ENCODE measurements at regions of chr10 and their contacts with region 1.

Region 1: DNA sequence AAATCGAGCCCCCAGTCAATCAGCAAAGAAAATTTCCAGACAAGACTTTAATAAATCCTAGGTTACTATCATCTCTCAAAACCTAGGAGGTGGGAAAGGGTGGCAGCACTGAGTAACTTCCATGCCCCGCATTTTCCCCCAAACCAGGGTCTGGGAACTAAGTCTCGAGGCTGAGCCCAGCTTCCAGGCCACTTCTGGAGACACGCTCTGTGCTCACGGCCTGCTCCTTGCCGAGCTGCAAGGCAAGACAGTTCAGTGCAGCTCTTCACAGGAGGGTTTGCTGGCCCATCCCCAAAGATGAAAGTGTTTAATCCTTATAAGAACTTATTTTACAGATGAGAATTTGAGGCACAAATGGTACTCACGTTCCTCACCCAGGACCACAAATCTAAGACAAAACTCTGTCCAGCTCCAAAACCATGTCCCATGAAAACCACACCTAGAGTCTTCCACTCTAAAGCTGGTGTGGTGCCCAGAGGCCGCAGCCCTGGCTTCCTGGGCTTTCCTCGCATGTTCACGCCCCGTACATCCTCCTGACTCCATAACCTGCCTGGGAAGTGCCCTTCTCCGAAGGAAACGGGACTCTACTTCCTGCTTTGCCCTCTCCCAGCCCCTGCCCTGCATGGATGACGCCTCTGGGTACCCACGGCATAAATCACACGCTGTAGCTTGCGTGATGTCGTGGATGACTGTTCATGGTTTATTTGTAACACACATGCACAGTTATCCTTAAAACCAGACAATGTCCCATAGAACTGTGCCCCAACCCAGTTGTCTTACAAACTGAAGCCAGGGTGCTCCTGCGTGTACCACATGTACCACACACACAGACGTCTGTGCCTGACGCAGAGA is 201.2 kb downstream of the DIP2C start:
- DNase-seq: peak in 1 of 35 experiments; percentile 18
- ATAC-seq: no peak
- H3K4me3 ChIP-seq: no peak overlapping the region
- H3K4me3 Mint-ChIP-seq: no peak overlapping the region
- H3K27ac ChIP-seq: no peak overlapping the region
- H3K27ac Mint-ChIP-seq: no peak overlapping the region
- H3K4me1 ChIP-seq: peaks cover 2 to 18% of the 10 kb centered on the region in 2 experiments
- H3K4me1 Mint-ChIP-seq: peaks cover 0 to 24% (median 20%) of the 10 kb centered on the region in 3 donors
- H3K27me3 ChIP-seq: peaks cover 0 to 22% of the 10 kb centered on the region in 2 experiments
- H3K27me3 Mint-ChIP-seq: peaks cover 12 to 14% of the 10 kb centered on the region in 2 donors

Region 2: DNA sequence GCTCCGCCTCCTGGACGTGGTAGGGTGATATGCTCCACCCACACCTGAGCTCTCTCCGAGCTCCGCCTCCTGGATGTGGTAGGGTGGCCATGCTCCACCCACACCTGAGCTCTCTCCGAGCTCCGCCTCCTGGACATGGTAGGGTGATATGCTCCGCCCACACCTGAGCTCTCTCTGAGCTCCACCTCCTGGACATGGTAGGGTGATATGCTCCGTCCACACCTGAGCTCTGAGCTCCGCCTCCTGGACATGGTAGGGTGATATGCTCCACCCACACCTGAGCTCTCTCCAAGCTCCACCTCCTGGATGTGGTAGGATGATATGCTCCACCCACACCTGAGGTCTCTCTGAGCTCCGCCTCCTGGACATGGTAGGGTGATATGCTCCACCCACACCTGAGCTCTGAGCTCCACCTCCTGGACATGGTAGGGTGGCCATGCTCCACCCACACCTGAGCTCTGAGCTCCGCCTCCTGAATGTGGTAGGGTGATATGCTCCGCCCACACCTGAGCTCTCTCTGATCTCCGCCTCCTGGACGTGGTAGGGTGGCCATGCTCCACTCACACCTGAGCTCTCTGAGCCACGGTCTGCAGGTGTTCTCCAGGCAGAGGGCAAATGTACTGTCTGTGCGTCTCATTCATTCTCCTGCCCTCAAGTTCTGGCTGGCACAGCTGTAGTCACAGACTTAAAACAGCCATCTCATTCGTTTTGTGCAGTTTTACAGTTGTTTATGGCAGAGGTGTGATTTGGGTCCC is 51.2 kb before region 1 on chr10:
- CTCF ChIA-PET with region 1: no interaction called
- POLR2A ChIA-PET with region 1: no interaction called
- DNase-seq: peak in 1 of 35 experiments; percentile 6
- ATAC-seq: peak; percentile 54 to 67 (median 58)
- H3K4me3 ChIP-seq: no peak overlapping the region
- H3K4me3 Mint-ChIP-seq: peak overlapping the region in 2 of 3 donors; percentile 35 to 60
- H3K27ac ChIP-seq: peak overlapping the region; percentile 15
- H3K27ac Mint-ChIP-seq: peak overlapping the region; percentile 70 to 82
- H3K4me1 ChIP-seq: peaks cover 18 to 29% of the 10 kb centered on the region in 2 experiments
- H3K4me1 Mint-ChIP-seq: peaks cover 42 to 57% (median 47%) of the 10 kb centered on the region in 3 donors
- H3K27me3 ChIP-seq: peaks cover 0 to 4% of the 10 kb centered on the region in 2 experiments
- H3K27me3 Mint-ChIP-seq: peaks cover 0 to 12% of the 10 kb centered on the region in 2 donors

Region 3: DNA sequence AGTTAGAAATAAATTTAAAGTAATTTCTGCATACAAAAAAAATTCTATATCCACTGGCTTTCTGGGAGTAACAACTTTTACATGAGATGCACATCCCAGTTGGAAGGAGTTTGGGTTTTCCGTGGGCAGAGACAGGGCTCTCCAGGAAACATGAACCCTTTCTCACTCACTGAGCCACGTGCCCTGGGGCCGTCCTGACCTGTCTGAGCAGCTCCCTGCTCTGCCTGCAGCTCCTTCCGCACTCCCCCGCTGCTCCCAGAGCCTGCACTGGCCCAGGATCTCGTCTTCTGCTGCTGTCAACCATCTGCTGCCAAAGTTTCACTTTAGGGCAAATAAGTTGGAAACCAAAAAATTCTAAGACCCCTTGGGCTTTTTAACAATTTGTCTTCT is 32.1 kb after region 1 on chr10:
- CTCF ChIA-PET with region 1: no interaction called
- POLR2A ChIA-PET with region 1: no interaction called
- DNase-seq: no peak
- ATAC-seq: no peak
- H3K4me3 ChIP-seq: no peak overlapping the region
- H3K4me3 Mint-ChIP-seq: no peak overlapping the region
- H3K27ac ChIP-seq: no peak overlapping the region
- H3K27ac Mint-ChIP-seq: no peak overlapping the region
- H3K4me1 ChIP-seq: no peaks in the 10 kb centered on the region
- H3K4me1 Mint-ChIP-seq: no peaks in the 10 kb centered on the region
- H3K27me3 ChIP-seq: peaks cover 2 to 41% of the 10 kb centered on the region in 2 experiments
- H3K27me3 Mint-ChIP-seq: peaks cover 6 to 23% of the 10 kb centered on the region in 2 donors

Region 4: DNA sequence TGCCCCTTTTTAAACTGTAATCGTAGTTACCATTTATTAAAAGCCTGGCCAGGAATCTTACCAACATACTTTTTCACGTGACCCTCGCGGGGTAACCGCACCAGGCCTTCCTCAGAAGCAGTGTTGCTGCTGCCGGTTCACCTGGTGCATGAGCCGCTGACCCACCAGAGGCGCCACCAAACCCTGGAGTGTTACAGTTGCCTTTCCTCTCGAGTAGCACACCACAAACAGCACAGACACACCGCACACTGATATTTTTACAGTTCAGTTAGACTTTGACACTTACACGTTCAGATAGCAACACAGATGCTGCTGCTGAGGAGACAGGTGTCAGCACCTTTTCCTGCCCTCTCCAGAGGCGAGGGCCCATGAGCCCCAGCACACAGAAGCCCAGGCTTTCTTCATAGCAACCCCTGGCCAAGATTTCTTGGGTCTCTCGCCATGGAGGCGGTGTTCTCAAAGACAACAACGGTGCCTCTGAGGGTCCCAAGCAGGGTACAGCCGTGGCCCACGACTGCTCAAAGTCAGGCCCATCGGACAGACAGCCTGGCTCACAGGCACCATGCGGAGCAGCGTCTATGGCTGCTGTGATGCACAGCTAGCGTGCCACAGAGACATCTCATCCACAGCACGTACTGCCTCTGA is 78.1 kb after region 1 on chr10:
- CTCF ChIA-PET with region 1: no interaction called
- POLR2A ChIA-PET with region 1: interaction called in 1 of 2 experiments, 10 read pairs
- DNase-seq: no peak
- ATAC-seq: no peak
- H3K4me3 ChIP-seq: no peak overlapping the region
- H3K4me3 Mint-ChIP-seq: no peak overlapping the region
- H3K27ac ChIP-seq: no peak overlapping the region
- H3K27ac Mint-ChIP-seq: no peak overlapping the region
- H3K4me1 ChIP-seq: no peaks in the 10 kb centered on the region
- H3K4me1 Mint-ChIP-seq: no peaks in the 10 kb centered on the region
- H3K27me3 ChIP-seq: peaks cover 0 to 26% of the 10 kb centered on the region in 2 experiments
- H3K27me3 Mint-ChIP-seq: peaks cover 16 to 18% of the 10 kb centered on the region in 2 donors